BJ (cell line): ENCODE measurements at regions of chr2 and their contacts with region 1.

Region 1: GRCh38 chr2:106542811-106543259 is 55.7 kb downstream of the CD8B2 start:
- DNase-seq: no peak
- H3K4me3 ChIP-seq: no peak overlapping the region
- H3K27me3 ChIP-seq: peaks cover 2% of the 10 kb centered on the region
- CTCF ChIP-seq: peak; percentile 91

Region 2: DNA sequence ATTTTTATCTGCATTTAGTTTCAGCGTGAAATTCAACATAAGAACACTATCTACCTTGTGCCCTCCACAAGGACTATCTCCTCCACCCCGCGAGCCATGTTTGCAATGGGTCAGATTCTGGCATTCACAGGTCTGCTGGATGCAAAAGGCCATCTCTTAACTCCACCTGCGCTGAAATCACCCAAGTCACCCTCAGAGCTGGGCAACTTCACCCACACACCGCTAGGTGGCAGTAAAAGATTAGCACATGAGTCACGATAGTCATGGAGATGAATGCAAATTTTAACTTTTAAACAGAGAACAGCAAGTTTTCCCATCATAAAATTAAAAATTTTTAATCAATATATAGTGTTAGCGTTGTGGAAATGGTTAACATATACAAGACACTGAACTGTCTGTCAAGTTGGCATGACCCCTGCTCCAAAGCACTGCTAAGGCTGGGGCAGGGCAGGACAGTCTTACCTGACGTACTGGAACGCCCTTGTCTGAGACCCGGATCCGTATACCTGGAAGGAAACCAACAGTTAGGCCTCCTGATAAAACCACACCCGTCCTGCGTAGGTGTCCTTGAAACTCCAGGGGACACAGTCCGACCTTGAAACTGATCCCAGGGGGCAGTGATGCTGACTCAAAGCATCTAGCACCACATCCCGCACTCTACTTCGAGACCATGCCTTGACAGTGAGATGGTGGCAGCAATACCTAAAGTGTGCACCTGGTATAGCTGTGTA is 438.3 kb before region 1 on chr2:
- CTCF ChIA-PET with region 1: interaction called, 50 read pairs
- POLR2A ChIA-PET with region 1: no interaction called
- DNase-seq: no peak
- H3K4me3 ChIP-seq: no peak overlapping the region
- H3K27me3 ChIP-seq: no peaks in the 10 kb centered on the region
- CTCF ChIP-seq: peak; percentile 91